Heart left ventricle (tissue), 16 donors: ENCODE measurements at regions of chr15 and their contacts with region 1.

Region 1: GRCh38 chr15:62506217-62506805 is 341.2 kb upstream of the C2CD4B start:
- DNase-seq: peak in 1 of 5 donors; percentile 21
- ATAC-seq: peak; percentile 69 to 85 (median 74)
- H3K4me3 ChIP-seq: peak overlapping the region in 1 of 12 donors; percentile 16
- H3K27ac ChIP-seq: peak overlapping the region; percentile 54 to 90 (median 82)
- H3K4me1 ChIP-seq: peaks cover 0 to 74% (median 48%) of the 10 kb centered on the region in 12 donors
- H3K27me3 ChIP-seq: no peaks in the 10 kb centered on the region
- CTCF ChIP-seq: no peak
- POLR2A ChIP-seq: no peak

Region 2: GRCh38 chr15:62544446-62544845 is 38.1 kb after region 1 on chr15:
- intact Hi-C with region 1: loop called in 2 of 10 experiments (anchors 5 kb)
- DNase-seq: no peak
- ATAC-seq: no peak
- H3K4me3 ChIP-seq: no peak overlapping the region
- H3K27ac ChIP-seq: peak overlapping the region in 2 of 12 donors; percentile 39 to 41
- H3K4me1 ChIP-seq: peaks cover 3 to 66% (median 34%) of the 10 kb centered on the region in 12 donors
- H3K27me3 ChIP-seq: no peaks in the 10 kb centered on the region
- CTCF ChIP-seq: no peak
- POLR2A ChIP-seq: no peak

Region 3: DNA sequence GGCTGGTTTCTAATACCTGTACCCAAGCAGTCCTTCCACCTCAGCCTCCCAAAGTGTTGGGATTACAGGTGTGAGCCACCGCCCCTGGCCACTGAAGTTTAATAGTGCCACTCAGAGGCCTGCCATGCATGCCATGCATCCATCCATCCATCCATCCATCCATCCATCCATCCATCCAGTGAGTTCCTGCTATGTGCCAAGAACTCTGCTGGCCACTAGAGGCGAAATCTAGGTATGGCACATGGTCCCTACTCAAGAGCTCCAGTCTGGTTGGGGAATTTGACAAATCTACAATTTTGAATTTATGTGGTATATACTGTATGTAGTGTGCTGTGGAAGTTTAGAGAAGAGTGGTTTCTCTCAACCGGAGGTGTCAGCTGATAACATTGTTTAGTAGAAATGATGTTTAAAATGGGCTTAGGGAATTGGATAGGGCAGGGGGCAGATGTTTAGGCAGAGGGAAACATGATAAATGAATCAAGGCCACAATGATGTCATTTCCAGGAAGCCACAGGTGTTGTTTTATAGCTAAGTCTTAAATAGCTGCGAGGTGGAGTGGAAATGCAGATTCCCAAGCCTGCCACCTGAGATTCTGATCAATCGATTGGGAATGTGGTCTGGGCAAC is 43.1 kb after region 1 on chr15:
- intact Hi-C with region 1: loop called in 2 of 10 experiments (anchors 5 kb)
- DNase-seq: no peak
- ATAC-seq: no peak
- H3K4me3 ChIP-seq: no peak overlapping the region
- H3K27ac ChIP-seq: no peak overlapping the region
- H3K4me1 ChIP-seq: peaks cover 3 to 52% (median 32%) of the 10 kb centered on the region in 12 donors
- H3K27me3 ChIP-seq: no peaks in the 10 kb centered on the region
- CTCF ChIP-seq: peak; percentile 9 to 58 (median 31)
- POLR2A ChIP-seq: no peak

Region 4: DNA sequence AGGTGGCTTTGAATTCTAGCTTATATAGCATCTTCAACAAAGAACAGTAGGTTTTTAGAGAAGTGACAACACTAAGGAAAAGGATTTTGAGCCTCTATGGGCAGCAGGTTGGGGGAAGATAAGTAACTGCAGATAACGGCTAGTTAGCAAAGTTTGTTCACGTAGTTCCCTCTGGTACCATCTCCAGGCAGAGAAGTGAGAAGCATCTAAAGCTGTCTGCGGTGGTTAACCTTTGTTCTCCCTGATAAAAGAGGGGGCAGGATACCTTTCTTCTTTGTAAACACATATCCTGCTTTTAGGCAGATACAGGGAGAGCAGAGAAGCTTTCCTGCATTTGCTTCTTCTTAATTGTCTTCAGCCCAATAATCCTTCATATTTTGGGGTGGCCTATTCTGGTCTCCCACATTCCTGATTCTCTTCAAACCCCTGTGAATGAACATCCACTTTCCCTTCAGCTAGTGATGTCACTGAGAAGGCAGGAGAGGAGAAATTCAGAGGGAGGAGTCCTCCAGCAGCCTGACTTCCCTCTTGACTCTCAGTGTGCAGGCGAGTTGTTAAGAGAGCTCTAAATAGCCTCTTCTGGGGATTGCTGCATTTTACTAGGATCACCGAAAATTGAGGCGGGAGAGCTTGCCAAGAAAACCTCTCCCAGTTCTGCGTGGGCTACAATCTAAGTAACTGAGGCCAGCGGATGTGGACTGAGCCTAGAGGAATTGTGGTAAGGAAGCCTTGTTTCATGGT is 52.5 kb after region 1 on chr15:
- intact Hi-C with region 1: loop called in 1 of 10 experiments (anchors 5 kb)
- DNase-seq: peak in 4 of 5 donors; percentile 54 to 78 (median 74)
- ATAC-seq: peak; percentile 55 to 86 (median 84)
- H3K4me3 ChIP-seq: no peak overlapping the region
- H3K27ac ChIP-seq: peak overlapping the region in 9 of 12 donors; percentile 34 to 75 (median 43)
- H3K4me1 ChIP-seq: peaks cover 0 to 34% (median 21%) of the 10 kb centered on the region in 12 donors
- H3K27me3 ChIP-seq: no peaks in the 10 kb centered on the region
- CTCF ChIP-seq: no peak
- POLR2A ChIP-seq: no peak